ENCODE measurements at regions of chr14 and their contacts with region 1.

Region 1: DNA sequence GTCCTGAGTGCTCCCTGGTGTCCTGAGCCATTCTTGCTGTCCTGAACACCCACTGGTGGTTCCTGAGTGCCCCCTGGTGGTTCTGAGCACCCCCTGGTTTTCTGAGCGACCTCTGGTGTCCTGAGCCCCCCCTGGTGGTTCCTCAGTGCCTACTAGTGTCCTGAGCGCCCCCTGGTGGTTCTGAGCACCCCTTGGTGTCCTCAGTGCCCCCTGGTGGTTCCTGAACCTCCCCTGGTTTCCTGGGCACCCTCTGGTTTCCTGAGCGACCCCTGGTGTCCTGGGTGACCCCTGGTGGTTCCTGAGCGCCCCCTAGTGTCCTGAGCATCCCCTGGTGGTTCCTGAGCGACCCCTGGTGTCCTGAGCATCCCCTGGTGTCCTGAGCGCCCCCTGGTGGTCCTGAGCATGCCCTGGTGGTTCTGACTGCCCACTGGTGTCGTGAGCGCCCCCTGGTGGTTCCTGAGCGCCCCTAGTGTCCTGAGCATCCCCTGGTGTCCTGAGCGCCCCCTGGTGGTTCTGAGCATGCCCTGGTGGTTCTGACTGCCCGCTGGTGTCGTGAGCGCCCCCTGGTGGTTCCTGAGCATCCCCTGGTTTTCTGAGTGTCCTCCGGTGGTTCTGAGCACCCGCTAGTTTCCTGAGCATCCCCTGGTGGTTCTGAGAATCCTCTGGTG is 473.1 kb downstream of the TMEM121 start:
- DNase-seq: peak; percentile 98
- ATAC-seq: peak; percentile 85
- H3K4me3 Mint-ChIP-seq: peak overlapping the region; percentile 68
- H3K27ac Mint-ChIP-seq: peak overlapping the region; percentile 85
- H3K4me1 Mint-ChIP-seq: peaks cover 50% of the 10 kb centered on the region
- H3K27me3 Mint-ChIP-seq: no peaks in the 10 kb centered on the region

Region 2: GRCh38 chr14:105682940-105683570 is 316.4 kb before region 1 on chr14:
- CTCF ChIA-PET with region 1: no interaction called
- POLR2A ChIA-PET with region 1: no interaction called
- intact Hi-C with region 1: loop called in 1 of 2 experiments (anchors 5 kb)
- DNase-seq: no peak
- ATAC-seq: no peak
- H3K4me3 Mint-ChIP-seq: no peak overlapping the region
- H3K27ac Mint-ChIP-seq: no peak overlapping the region
- H3K4me1 Mint-ChIP-seq: peaks cover 2% of the 10 kb centered on the region
- H3K27me3 Mint-ChIP-seq: peaks cover 3% of the 10 kb centered on the region

Region 3: DNA sequence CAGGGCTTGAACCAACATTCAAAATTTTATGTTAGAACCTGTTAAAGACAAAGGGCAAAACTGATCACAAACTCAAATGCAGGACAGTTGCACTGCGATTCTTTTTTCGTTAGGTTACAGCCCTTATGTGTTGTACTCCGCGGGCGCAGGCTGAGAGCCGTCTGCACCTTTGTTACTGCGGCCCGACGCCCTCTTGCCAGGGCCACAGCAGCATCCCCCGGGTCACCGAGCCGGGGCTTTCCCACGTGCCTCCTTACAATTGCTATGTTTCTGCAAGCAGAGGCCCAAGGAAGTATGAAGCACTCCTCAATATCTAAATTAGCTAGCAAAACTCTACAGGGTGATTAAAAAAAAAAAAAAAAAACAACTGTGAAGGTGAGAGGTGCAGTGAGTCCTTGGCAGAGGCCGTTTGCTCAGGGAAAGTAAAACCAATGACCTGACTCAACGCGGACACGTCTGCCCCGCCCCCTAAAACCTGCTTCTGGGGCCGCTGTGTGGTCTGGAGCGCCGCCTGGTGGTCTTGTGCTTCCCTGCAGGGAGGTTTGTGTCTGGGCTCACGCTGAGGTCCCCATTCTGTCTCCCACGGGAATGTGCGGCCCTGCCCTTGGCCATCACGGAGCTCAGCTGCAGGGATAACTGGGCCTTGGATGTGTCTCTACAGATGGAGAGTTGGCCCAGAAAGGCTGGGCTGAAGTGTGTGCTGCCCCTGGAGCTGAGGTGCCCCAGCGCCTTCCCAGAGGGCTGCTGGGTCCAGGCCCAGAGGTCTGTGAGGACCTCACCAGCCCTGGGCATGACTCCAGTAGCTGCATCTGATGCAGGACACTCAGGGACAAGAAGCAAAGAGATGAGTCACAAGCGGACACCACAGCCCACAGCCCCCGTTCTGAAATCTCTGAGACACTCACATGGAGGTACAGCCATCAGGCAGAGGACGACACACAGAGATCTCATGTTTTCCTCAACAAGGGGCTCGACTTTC is 54.6 kb before region 1 on chr14:
- CTCF ChIA-PET with region 1: interaction called, 3 read pairs
- POLR2A ChIA-PET with region 1: no interaction called
- intact Hi-C with region 1: loop called in 1 of 2 experiments (anchors 1 kb)
- DNase-seq: peak; percentile 92
- ATAC-seq: peak; percentile 96
- H3K4me3 Mint-ChIP-seq: no peak overlapping the region
- H3K27ac Mint-ChIP-seq: no peak overlapping the region
- H3K4me1 Mint-ChIP-seq: peaks cover 6% of the 10 kb centered on the region
- H3K27me3 Mint-ChIP-seq: no peaks in the 10 kb centered on the region

Region 4: DNA sequence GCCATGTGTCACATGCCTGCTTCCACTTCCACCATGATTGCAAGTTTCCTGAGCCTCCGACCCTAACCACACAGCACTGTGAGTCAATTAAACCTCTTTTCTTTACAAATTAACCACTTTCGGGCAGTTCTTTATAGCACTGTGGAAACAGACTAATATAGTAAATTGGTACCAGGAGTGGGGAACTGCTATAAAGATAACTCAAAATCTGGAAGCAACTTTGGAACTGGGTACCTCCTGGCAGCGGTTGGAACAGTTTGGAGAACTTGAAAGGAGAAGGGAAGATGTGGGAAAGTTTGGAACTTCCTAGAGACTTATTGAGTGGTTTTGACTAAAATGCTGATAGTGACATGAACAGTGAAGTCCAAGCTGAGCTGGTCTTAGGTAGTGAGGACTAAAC is 37.0 kb before region 1 on chr14:
- CTCF ChIA-PET with region 1: no interaction called
- POLR2A ChIA-PET with region 1: no interaction called
- intact Hi-C with region 1: no loop called
- DNase-seq: no peak
- ATAC-seq: no peak
- H3K4me3 Mint-ChIP-seq: no peak overlapping the region
- H3K27ac Mint-ChIP-seq: no peak overlapping the region
- H3K4me1 Mint-ChIP-seq: peaks cover 6% of the 10 kb centered on the region
- H3K27me3 Mint-ChIP-seq: peaks cover 8% of the 10 kb centered on the region

Region 5: DNA sequence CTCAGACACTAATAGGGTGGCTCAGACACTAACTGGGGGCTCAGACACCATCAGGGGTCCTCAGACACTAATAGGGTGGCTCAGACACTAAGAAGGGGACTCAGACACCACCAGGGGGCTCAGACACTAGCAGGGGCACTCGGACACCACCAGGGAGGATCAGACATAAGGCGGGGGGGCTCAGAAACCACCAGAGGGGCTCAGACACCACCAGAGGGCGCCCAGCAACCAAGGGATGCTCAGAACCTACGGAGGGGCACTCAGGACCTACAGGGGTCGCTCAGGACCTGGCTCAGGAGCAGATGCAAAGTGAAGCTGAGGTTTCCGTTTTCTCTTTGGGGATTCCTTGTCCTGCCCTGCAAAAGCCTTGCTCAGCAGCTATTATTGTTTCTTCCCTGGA is 24.6 kb before region 1 on chr14:
- CTCF ChIA-PET with region 1: interaction called, 9 read pairs
- POLR2A ChIA-PET with region 1: no interaction called
- intact Hi-C with region 1: loop called (anchors 1 to 2 kb)
- DNase-seq: peak; percentile 81
- ATAC-seq: peak; percentile 96
- H3K4me3 Mint-ChIP-seq: no peak overlapping the region
- H3K27ac Mint-ChIP-seq: no peak overlapping the region
- H3K4me1 Mint-ChIP-seq: peaks cover 3% of the 10 kb centered on the region
- H3K27me3 Mint-ChIP-seq: no peaks in the 10 kb centered on the region

Region 6: DNA sequence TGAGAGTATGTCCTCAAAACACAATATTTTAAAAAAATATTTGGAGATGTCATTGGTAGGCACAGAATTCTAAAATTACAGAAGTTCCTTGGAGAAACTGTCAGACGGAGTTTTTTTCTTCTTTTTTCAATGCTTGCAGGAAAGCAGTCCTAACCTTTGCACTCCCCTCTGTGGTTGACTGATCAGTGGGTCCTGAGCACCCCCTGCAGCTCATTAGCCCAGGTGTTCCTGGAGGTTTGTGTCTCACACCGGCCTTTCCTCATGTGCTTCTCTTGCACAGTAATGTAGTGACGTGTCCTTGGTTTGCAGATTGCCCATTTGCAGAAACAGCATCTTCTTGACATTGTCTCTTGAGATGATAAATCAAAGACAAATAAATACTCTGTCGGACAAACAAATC is 39.9 kb after region 1 on chr14:
- CTCF ChIA-PET with region 1: interaction called, 12 read pairs
- POLR2A ChIA-PET with region 1: no interaction called
- intact Hi-C with region 1: loop called in 1 of 2 experiments (anchors 2 kb)
- DNase-seq: peak; percentile 82
- ATAC-seq: peak; percentile 96
- H3K4me3 Mint-ChIP-seq: no peak overlapping the region
- H3K27ac Mint-ChIP-seq: no peak overlapping the region
- H3K4me1 Mint-ChIP-seq: peaks cover 13% of the 10 kb centered on the region
- H3K27me3 Mint-ChIP-seq: peaks cover 2% of the 10 kb centered on the region

Region 7: DNA sequence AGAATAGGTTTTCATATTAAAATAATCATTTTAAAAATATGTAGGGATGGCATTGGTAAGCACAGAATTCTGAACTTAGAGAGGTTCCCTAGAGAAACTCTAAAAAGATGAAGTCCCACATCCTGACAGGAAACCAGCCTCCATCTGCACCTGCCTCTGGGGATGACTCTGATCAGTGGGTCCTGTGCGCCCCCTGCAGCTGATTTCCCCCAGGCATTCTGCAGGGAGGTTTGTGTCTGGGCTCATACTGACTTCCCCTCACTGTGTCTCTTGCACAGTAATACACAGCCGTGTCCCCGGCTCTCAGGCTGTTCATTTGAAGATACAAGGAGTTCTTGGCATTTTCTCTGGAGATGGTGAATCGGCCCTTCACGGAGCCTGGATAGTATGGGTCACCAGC is 129.8 kb after region 1 on chr14:
- CTCF ChIA-PET with region 1: no interaction called
- POLR2A ChIA-PET with region 1: no interaction called
- intact Hi-C with region 1: no loop called
- DNase-seq: peak; percentile 46
- ATAC-seq: no peak
- H3K4me3 Mint-ChIP-seq: no peak overlapping the region
- H3K27ac Mint-ChIP-seq: no peak overlapping the region
- H3K4me1 Mint-ChIP-seq: peaks cover 30% of the 10 kb centered on the region
- H3K27me3 Mint-ChIP-seq: peaks cover 2% of the 10 kb centered on the region